Cardiac septum (tissue), 1 donor: ENCODE measurements at regions of chr5 and their contacts with region 1.

Region 1: DNA sequence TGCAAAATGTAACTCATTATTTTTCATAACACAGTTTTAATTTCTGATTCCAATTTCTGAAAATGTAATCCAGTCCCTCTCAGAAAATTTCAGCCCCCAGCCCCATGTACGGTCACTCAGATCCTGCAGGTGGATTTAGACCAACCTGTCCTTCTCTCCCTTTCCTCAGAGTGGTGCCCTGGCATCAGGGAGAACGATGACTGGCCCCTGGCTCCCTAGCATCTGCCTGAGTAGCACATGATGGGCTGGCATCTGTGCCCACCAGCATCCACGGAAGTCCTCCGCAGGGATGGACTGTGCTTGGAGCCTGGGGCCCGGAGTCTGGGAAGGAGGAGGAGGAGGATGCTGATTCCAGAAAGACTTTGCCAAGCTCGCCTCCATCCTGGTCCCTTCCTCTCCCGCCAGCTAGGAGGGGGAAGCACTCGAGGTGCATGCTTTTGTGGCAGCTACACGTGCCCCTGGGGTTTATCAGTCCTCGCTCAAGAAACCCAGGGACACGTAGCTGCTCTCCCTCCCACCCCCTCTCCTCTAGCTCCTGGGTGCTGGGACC is 54.4 kb upstream of the RUFY1 start:
- DNase-seq: no peak

Region 2: DNA sequence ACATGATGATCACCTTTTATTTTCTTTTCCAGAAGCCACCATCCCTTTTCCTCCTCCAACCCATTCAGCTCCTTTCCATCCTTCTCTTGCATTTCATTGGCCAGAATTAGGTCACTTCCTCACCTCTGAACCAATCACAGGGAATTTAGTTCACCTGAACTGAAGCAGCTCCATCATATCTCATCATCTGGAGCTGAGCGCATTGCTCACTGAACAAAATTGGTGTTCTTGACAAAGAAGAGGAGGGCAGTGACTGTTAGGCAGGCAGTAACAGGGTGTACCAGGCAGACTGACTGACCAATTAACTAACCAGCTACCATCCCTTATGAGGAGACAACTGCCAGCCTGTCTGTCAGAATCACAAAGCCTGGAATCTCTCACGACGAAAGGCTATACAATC is 763.7 kb before region 1 on chr5:
- intact Hi-C with region 1: loop called (anchors 10 kb)
- DNase-seq: no peak

Region 3: DNA sequence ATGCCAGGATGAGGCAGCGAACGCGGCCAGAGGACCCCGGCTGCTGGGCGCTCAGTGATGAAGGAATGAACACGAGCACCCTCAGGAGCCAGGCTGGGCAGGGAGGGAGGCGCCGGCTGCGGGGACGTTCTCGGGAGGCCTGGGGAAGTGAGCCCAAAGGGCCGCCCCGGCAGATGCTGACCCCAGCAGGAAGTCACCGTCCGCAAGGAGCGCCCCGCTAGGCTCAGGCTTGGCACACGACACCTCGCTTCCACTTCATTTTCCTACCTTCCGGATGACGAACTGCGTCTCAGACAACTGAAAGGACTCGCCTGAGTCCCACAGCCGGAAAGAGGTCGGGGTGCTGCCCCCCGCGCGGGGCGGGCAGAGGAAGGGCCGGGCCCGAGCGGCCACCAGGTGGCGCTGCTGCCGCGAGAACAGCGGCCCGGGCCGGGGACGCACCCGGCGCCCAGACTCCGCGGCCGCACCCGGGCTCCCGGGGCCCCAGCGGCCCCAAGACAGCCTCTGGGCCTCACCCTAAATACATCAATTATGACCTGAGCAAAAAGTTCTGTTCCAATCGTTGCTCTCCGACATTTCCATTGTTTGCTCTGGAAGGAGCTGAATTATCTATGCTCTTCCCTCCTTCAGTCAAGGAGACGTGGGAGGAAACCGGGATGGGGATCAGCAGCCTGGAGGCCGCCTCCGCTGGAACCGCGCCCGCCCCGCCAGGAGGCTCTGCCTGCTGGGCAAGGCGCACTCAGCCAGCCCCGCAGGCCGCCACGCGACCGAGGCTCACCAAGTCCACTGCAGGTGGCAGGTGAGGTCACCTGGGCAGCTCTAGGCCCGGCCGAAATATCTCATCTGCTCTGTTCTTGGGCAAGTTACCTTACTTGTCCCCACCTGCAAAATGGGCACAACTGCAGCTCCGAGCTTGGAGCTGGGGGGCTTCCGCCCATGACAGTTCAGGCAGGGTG is 328.8 kb before region 1 on chr5:
- intact Hi-C with region 1: loop called (anchors 1 kb)
- DNase-seq: peak; percentile 74

Region 4: DNA sequence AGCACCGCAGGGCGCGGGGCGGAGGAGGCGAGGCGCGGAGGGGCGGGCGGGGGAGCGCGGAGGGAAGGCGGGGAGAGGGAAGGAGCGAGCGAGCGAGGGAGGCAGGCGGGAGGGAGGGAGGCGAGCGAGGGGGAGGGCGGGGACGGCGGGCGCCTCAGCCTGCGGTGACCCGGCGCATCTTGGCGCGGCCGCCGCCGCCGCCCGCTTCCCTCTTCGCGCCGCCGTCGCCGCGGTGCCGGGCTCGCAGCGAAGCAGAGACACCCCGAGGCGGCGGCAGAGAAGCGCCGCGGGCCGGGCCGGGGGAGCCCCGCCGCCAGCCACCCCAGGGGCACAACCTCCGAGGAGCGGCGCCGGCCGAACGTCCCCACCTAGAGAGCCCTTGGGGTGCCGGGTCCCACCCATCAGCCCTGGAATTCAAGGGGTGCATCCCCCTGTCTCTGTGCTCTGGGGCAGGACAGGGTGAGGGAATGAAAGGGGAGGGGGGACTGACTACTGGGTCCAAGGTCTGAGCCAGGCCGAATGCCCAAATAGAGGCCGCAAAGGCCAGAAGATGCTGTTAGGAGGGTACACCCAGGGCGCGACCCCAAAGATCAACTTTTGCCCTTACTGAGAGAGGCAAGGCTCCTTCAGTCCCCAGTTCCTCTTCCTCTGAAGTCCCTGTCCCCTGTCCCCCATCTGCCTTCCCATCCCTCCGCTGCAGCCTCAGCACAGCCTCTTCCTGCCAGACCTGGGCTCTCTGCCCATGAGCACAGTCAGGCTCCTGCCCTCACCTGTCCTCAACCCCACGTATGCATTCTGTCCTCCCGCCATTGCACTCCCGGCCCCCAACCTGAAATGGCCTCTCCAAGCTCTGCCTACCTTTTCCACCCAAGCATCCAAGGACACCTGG is 150.3 kb before region 1 on chr5 and contains the start of gene ADAMTS2:
- intact Hi-C with region 1: loop called (anchors 10 kb)
- DNase-seq: no peak
- total RNA-seq, gene ADAMTS2: 5.9 TPM